ENCODE measurements at regions of chr11 and their contacts with region 1.

Region 1: GRCh38 chr11:67572747-67573419 is 10.7 kb upstream of the GSTP1 start:
- DNase-seq: no peak
- H3K4me3 Mint-ChIP-seq: no peak overlapping the region
- H3K27ac Mint-ChIP-seq: no peak overlapping the region
- H3K4me1 Mint-ChIP-seq: no peaks in the 10 kb centered on the region
- H3K27me3 Mint-ChIP-seq: peaks cover 15% of the 10 kb centered on the region

Region 2: DNA sequence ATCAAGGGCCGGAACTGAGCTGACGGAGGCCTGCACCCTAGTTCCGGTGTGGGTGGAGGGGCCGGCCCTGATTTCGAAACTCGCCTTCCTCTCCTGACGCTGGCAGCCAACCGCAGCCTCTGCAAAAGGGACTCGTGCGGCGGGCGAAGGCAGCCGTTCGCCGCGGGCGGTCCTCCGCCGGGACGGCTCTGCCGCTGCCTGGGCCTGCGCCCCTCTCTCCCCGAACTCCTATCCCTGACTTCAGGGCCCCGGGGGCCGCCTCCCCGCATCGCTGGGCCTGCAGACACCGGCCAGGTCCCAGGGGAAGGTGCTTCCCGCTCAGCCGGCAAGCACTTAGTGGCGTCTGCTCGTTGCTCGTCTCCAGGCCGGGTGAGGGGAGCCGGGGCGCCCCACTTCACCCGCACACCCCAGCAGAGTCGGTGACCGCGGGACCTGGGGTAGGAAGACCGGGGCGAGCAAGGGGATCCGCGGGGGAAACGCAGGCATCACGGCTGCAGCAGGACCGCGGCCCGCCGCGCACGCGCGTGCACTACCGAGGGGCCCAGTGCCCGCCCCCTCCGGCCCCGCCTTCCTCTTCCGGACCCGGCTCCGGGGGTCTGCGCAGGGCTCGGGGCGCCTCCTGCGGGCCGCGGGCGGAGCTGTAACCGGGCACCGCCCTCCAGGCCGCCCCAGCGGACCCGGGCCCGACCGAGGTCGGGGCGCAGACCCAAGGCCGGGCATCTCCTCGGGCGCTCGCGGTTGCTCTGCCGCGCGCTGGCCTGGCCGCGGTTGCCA is 284.2 kb before region 1 on chr11:
- intact Hi-C with region 1: no loop called
- DNase-seq: peak; percentile 88
- H3K4me3 Mint-ChIP-seq: peak overlapping the region; percentile 77
- H3K27ac Mint-ChIP-seq: peak overlapping the region; percentile 97
- H3K4me1 Mint-ChIP-seq: peaks cover 36% of the 10 kb centered on the region
- H3K27me3 Mint-ChIP-seq: peaks cover 2% of the 10 kb centered on the region

Region 3: GRCh38 chr11:67486481-67487195 is 86.2 kb before region 1 on chr11:
- intact Hi-C with region 1: no loop called
- DNase-seq: peak; percentile 44
- H3K4me3 Mint-ChIP-seq: peak overlapping the region; percentile 82
- H3K27ac Mint-ChIP-seq: peak overlapping the region; percentile 100
- H3K4me1 Mint-ChIP-seq: peaks cover 70% of the 10 kb centered on the region
- H3K27me3 Mint-ChIP-seq: no peaks in the 10 kb centered on the region

Region 4: DNA sequence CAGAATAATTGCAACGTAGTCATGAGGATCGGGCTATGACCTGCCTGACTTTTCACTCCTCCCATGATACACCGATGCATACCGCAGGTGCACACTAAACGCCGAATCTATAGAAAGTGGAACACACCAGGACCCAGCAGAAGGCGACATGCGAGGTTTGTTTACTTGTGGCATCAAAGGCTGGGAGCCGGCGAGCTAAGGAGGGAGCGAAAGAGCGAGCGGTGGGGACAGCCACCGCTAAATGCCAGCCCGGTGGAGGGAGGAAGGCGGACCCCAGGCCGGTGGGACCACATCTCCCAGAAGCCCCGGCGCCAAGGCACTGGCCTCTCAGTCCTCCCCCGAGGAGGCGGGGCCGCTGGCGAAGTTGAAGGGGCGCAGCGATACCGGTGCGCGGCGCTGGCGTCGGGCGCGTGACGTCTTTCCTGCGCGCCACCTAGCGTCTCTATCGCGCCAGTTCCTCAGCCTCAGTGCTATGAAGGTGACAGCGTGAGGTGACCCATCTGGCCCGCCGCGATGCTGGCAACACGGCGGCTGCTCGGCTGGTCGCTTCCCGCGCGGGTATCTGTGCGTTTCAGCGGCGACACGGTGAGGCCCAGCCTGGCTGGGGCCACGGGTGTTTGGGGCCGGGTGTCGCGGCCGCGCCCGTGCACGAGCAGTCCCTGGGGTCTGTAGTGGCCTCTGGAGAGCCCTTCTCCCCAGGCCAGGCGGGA is 33.8 kb after region 1 on chr11 and contains the start of gene NDUFV1:
- intact Hi-C with region 1: loop called (anchors 2 kb)
- DNase-seq: peak; percentile 97
- H3K4me3 Mint-ChIP-seq: peak within 1 kb of the TSS; percentile 94
- H3K27ac Mint-ChIP-seq: peak within 1 kb of the TSS; percentile 97
- H3K4me1 Mint-ChIP-seq: peaks cover 26% of the 10 kb centered on the region
- H3K27me3 Mint-ChIP-seq: peaks cover 7% of the 10 kb centered on the region
- total RNA-seq, gene NDUFV1: 289 and 303 TPM in 2 replicates

Region 5: DNA sequence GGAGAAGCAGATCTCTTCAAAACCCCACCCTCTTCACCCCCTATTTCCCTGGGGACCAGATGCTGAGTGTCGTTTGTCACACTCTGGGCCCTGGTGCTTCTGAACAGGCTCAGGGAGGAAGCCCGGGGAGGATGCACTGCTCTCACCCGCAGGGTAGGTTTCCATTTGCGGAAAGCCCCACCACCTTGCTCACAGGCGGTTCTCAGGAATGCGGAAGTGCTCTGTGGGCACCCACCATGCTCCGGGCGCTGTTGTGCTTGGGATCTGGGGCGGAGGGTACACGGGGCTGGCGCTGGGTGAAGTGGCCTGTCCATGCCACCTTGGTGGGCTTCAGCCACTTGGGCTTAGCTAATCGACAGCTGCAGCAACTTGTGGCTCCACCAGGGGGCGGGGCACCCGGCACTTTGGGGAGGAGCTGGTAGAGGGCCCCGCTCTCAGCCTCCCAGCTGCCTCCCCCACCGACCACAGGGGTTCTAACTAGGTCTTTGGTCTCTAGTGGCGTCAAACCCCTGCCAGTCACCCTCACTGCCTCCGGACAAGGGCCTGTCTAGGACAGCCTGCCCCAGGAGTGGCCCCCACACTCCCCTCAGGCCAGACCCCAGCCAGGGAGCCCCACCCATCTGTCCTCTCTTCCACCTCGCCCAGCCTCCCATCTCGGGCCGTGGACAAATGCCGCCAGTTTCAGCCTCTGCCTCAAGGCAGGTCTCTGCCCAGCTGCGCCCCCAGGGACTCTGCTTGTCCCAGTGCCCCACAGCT is 41.3 kb after region 1 on chr11:
- intact Hi-C with region 1: loop called (anchors 1 kb)
- DNase-seq: peak; percentile 86
- H3K4me3 Mint-ChIP-seq: peak overlapping the region; percentile 79
- H3K27ac Mint-ChIP-seq: peak overlapping the region; percentile 98
- H3K4me1 Mint-ChIP-seq: peaks cover 29% of the 10 kb centered on the region
- H3K27me3 Mint-ChIP-seq: no peaks in the 10 kb centered on the region

Region 6: GRCh38 chr11:67640021-67640757 is 67.3 kb after region 1 on chr11:
- intact Hi-C with region 1: loop called (anchors 1 kb)
- DNase-seq: peak; percentile 28
- H3K4me3 Mint-ChIP-seq: no peak overlapping the region
- H3K27ac Mint-ChIP-seq: no peak overlapping the region
- H3K4me1 Mint-ChIP-seq: peaks cover 7% of the 10 kb centered on the region
- H3K27me3 Mint-ChIP-seq: peaks cover 4% of the 10 kb centered on the region

Region 7: GRCh38 chr11:67658691-67659271 is 85.9 kb after region 1 on chr11:
- intact Hi-C with region 1: loop called (anchors 1 kb)
- DNase-seq: no peak
- H3K4me3 Mint-ChIP-seq: no peak overlapping the region
- H3K27ac Mint-ChIP-seq: no peak overlapping the region
- H3K4me1 Mint-ChIP-seq: peaks cover 4% of the 10 kb centered on the region
- H3K27me3 Mint-ChIP-seq: peaks cover 6% of the 10 kb centered on the region

Measured in activated T-helper 1 cell treated with anti-CD3 and anti-CD28 coated beads, Interleukin-12 subunit alpha, Interleukin-12 subunit beta, Interleukin-2, Interleukin-4 antibody, amounts not matched to agents 30 ng/mL and 10 ng/mL and 1 ng/mL, durations not matched to agents 14 hours and 24 hours and 36 hours (primary cell).